ENCODE measurements at regions of chr2 and their contacts with region 1.

Region 1: GRCh38 chr2:119641562-119642258 is 37.3 kb upstream of the TMEM177 start:
- DNase-seq: peak; percentile 81
- ATAC-seq: peak; percentile 91
- H3K4me3 Mint-ChIP-seq: no peak overlapping the region
- H3K27ac Mint-ChIP-seq: no peak overlapping the region
- H3K4me1 Mint-ChIP-seq: peaks cover 1% of the 10 kb centered on the region
- H3K27me3 Mint-ChIP-seq: peaks cover 22% of the 10 kb centered on the region

Region 2: DNA sequence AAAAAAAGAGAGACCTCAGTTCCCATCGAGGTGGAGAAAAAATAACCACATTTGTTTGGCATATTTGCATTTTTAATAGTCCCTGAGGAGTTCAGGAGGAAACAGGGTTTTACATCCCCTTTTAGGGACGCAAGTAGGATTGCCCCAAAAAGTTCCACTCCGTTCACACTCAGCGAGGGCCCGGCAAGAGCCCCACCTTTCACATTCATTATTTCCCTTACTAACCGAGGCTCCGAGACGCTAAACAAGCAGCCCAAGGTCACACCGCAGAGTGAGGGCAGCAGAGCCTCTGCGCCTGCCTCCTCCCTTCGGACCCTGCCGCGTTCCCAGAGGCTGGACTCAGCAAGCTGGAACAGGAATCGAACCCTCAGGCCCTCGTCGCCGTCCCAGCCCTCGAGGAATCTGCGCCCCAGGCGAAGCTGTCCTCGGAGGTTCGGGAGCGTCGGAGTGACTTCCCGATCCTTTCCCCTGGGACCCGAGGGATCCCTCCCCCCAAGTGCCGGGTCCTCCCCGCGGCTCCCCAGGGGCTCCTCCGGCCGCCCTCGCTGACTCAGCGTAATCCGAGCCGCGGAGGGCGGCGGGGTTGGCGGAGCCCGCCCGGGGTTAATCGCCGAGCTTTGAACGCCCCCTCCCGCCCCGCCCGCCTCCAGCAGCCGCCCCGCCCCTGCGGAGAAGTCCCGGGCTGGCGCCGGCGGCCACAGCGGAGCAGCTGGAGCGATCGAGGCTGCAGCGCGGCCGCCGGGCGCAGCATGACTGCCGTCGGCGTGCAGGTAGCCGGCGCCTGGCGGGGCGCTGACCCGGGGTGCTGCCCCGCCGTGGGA is 210.3 kb before region 1 on chr2 and contains the start of gene TMEM37:
- CTCF ChIA-PET with region 1: no interaction called
- DNase-seq: no peak
- ATAC-seq: no peak
- H3K4me3 Mint-ChIP-seq: no peak within 1 kb of the TSS
- H3K27ac Mint-ChIP-seq: no peak within 1 kb of the TSS
- H3K4me1 Mint-ChIP-seq: peaks cover 3% of the 10 kb centered on the region
- H3K27me3 Mint-ChIP-seq: peaks cover 65% of the 10 kb centered on the region
- total RNA-seq, gene TMEM37: not detected

Region 3: GRCh38 chr2:119517433-119517832 is 124.3 kb before region 1 on chr2:
- CTCF ChIA-PET with region 1: no interaction called
- DNase-seq: peak; percentile 59
- ATAC-seq: peak; percentile 49
- H3K4me3 Mint-ChIP-seq: no peak overlapping the region
- H3K27ac Mint-ChIP-seq: no peak overlapping the region
- H3K4me1 Mint-ChIP-seq: no peaks in the 10 kb centered on the region
- H3K27me3 Mint-ChIP-seq: peaks cover 12% of the 10 kb centered on the region

Region 4: DNA sequence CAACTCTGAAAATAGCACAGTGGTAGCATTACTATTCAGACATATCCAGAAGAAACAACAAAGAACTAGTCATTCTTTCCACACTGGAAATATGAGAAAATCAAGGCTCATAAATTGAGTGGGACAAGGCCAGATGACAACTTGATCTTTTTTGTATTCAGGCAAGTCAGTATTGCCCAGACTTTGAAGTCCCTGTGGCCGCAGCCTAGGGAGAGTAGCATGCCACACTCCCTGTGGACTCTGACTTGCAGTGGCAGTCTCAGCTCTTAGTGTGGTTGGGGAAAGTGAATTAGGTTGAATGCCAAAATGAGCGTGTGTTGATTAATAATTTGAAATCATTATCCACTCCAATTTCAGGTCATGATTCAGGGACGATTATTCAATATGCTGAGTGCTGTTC is 16.5 kb before region 1 on chr2:
- CTCF ChIA-PET with region 1: no interaction called
- DNase-seq: no peak
- ATAC-seq: no peak
- H3K4me3 Mint-ChIP-seq: no peak overlapping the region
- H3K27ac Mint-ChIP-seq: no peak overlapping the region
- H3K4me1 Mint-ChIP-seq: no peaks in the 10 kb centered on the region
- H3K27me3 Mint-ChIP-seq: peaks cover 30% of the 10 kb centered on the region

Region 5: DNA sequence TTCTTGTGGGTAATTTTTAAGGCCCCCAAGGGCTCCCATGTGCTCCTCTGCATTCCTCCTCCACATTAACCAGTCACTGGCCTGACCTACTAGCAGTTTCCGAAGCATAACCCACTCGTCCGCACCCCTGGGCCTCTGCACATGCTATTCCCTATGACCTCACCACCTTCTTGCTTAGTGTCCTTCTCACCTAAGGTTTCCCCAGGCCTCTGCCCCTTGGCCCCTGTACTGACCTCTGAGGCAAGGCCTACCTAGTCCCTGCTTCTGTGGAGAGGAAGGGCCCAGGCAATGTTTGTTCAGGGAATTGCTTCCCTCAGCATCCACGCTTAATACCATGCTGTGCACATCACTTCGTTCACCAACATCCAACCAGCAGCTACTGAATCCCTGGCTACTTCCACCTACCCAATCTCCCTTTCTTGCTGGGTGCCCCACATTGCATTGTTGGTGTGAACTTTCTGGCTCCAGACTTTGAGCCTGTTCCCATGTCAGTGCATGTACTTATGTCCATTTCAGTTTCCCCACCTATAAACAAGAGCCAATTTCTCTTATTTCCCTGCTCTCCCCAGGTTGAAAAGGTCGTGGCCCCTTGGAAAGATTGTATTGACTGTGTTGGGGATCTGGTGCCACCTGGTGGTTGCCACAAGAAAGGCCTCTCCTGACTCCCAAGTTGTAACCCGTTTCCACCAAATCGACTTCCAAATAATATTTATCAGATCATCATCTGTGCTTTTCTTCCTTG is 18.1 kb after region 1 on chr2:
- CTCF ChIA-PET with region 1: interaction called, 40 read pairs
- DNase-seq: peak; percentile 51
- ATAC-seq: no peak
- H3K4me3 Mint-ChIP-seq: no peak overlapping the region
- H3K27ac Mint-ChIP-seq: no peak overlapping the region
- H3K4me1 Mint-ChIP-seq: peaks cover 14% of the 10 kb centered on the region
- H3K27me3 Mint-ChIP-seq: peaks cover 13% of the 10 kb centered on the region

Measured in activated CD8-positive, alpha-beta memory T cell treated with anti-CD3 and anti-CD28 coated beads, Interleukin-2, amount 10 ng/mL, durations not matched to agents 7 days and 5 days (primary cell).